Tibial artery (tissue), 4 donors: ENCODE measurements at regions of chr22 and their contacts with region 1.

Region 1: GRCh38 chr22:36856121-36856791 is 4.5 kb upstream of the NCF4 start:
- DNase-seq: peak; percentile 77 to 91
- H3K4me3 ChIP-seq: no peak overlapping the region
- H3K27ac ChIP-seq: no peak overlapping the region
- H3K4me1 ChIP-seq: peaks cover 0 to 9% (median 3%) of the 10 kb centered on the region in 4 donors
- H3K27me3 ChIP-seq: peaks cover 0 to 37% of the 10 kb centered on the region in 2 donors
- CTCF ChIP-seq: peak; percentile 100

Region 2: GRCh38 chr22:36546092-36546804 is 310.0 kb before region 1 on chr22:
- intact Hi-C with region 1: loop called (anchors 5 kb)
- DNase-seq: peak in 1 of 2 donors; percentile 32
- H3K4me3 ChIP-seq: no peak overlapping the region
- H3K27ac ChIP-seq: no peak overlapping the region
- H3K4me1 ChIP-seq: no peaks in the 10 kb centered on the region
- H3K27me3 ChIP-seq: peaks cover 0 to 57% of the 10 kb centered on the region in 2 donors
- CTCF ChIP-seq: peak in 1 of 2 experiments; percentile 37

Region 3: DNA sequence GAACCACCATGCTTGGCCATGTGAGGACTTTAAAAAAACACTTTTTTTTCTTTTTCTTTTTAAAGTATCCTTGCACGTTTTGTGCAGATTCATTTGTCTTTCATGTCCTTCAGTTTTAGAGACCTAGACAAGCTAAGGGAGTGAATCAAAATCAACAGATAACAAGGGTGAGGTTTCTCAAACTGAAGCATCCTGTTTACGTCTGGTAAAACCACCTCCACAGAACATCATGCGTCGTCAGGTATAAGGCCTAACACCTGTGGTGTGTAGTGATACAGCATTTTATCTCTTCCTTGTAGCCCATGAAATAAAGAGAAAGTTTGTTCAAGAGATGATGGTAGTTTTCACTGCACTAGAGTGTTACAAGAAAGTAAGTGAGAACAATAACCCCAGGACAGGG is 30.9 kb after region 1 on chr22:
- intact Hi-C with region 1: no loop called
- DNase-seq: no peak
- H3K4me3 ChIP-seq: no peak overlapping the region
- H3K27ac ChIP-seq: no peak overlapping the region
- H3K4me1 ChIP-seq: no peaks in the 10 kb centered on the region
- H3K27me3 ChIP-seq: peaks cover 0 to 5% of the 10 kb centered on the region in 2 donors
- CTCF ChIP-seq: no peak

Region 4: GRCh38 chr22:36977947-36978660 is 121.8 kb after region 1 on chr22:
- intact Hi-C with region 1: loop called (anchors 5 kb)
- DNase-seq: peak; percentile 90 to 92
- H3K4me3 ChIP-seq: peak overlapping the region; percentile 42 to 44
- H3K27ac ChIP-seq: no peak overlapping the region
- H3K4me1 ChIP-seq: peaks cover 0 to 6% (median 4%) of the 10 kb centered on the region in 4 donors
- H3K27me3 ChIP-seq: peaks cover 0 to 33% of the 10 kb centered on the region in 2 donors
- CTCF ChIP-seq: peak; percentile 93 to 94